CD4-positive, alpha-beta memory T cell (primary cell): ENCODE measurements at regions of chr20 and their contacts with region 1.

Region 1: DNA sequence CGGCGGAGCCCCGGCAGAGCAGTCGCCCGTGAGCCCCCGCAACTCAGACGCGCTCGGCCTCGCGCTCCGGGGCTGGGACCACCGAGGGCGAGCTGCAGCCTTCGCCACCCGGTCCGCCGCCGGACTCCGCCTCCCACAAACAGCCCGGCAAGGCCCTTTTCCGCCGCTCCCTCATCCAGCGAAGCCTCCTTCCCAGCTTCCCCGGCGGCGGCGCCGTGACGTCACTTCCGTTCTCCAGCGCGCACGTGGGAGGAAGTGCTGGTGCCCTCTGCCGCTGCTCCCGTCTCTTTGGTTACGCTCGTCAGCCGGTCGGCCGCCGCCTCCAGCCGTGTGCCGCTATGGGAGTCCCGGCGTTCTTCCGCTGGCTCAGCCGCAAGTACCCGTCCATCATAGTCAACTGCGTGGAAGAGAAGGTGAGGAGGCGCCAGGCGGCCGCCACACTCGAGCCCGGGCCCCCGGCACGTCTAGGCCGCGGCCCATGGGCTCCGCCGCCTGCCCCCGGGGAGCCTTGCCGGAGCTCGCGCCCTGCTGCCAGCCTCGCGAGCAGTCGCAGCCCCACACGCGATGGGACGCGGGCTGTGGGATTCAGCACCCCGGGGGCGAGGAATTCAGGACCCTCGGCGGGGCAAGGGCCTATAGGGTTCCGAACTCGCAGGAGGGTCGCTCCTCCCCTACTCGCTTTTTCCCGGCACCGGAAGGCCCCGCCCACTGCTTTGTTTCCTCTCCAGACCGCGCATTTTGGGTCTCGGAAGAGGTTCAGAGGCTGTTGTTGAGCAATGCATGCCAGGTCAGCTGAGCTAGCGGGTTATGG is at the start of gene XRN2:
- DNase-seq: peak; percentile 92 to 94 (median 92)
- H3K4me3 ChIP-seq: peak within 1 kb of the TSS; percentile 89 to 91
- H3K4me3 Mint-ChIP-seq: peak within 1 kb of the TSS; percentile 91 to 98 (median 97)
- H3K27ac ChIP-seq: peak within 1 kb of the TSS; percentile 91
- H3K27ac Mint-ChIP-seq: peak within 1 kb of the TSS; percentile 98 to 99 (median 99)
- H3K4me1 ChIP-seq: peaks cover 18% of the 10 kb centered on the region
- H3K4me1 Mint-ChIP-seq: peaks cover 23 to 41% (median 28%) of the 10 kb centered on the region in 4 donors
- H3K27me3 ChIP-seq: no peaks in the 10 kb centered on the region
- H3K27me3 Mint-ChIP-seq: peaks cover 0 to 3% of the 10 kb centered on the region in 2 donors
- total RNA-seq, gene XRN2: 52.8 to 56.3 TPM

Region 2: GRCh38 chr20:20712474-20713243 is 590.6 kb before region 1 on chr20 and contains the start of gene RALGAPA2:
- CTCF ChIA-PET with region 1: no interaction called
- POLR2A ChIA-PET with region 1: no interaction called
- intact Hi-C with region 1: loop called (anchors 1 kb)
- DNase-seq: peak; percentile 94 to 96 (median 94)
- H3K4me3 ChIP-seq: peak within 1 kb of the TSS; percentile 42 to 79
- H3K4me3 Mint-ChIP-seq: peak within 1 kb of the TSS; percentile 91 to 97 (median 96)
- H3K27ac ChIP-seq: peak within 1 kb of the TSS; percentile 79
- H3K27ac Mint-ChIP-seq: peak within 1 kb of the TSS; percentile 90 to 99 (median 96)
- H3K4me1 ChIP-seq: peaks cover 17% of the 10 kb centered on the region
- H3K4me1 Mint-ChIP-seq: peaks cover 25 to 39% (median 29%) of the 10 kb centered on the region in 4 donors
- H3K27me3 ChIP-seq: no peaks in the 10 kb centered on the region
- H3K27me3 Mint-ChIP-seq: peaks cover 0 to 3% of the 10 kb centered on the region in 2 donors
- total RNA-seq, gene RALGAPA2: 33.6 to 36.3 TPM

Region 3: DNA sequence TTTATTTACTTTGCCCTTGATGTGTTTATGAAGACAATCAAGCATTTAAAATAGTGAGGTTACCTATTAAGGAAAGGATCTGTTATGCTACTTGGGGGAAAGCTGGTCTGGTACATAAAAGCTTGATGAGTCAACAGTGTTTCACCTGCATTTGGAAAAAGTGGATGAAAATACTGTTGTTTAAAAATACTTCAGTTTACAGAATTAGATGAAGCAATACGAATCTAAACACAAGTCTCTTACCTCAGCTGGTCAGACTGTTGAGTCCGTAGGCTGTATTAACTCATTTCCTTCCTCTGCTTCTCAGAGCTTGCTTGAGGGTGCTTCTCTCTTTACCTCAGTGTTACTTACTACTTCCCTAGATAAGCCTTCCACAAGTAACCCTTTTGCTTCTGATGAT is 58.0 kb after region 1 on chr20:
- CTCF ChIA-PET with region 1: no interaction called
- POLR2A ChIA-PET with region 1: no interaction called
- intact Hi-C with region 1: loop called (anchors 10 kb)
- DNase-seq: no peak
- H3K4me3 ChIP-seq: no peak overlapping the region
- H3K4me3 Mint-ChIP-seq: no peak overlapping the region
- H3K27ac ChIP-seq: no peak overlapping the region
- H3K27ac Mint-ChIP-seq: peak overlapping the region in 1 of 7 donors; percentile 10
- H3K4me1 ChIP-seq: no peaks in the 10 kb centered on the region
- H3K4me1 Mint-ChIP-seq: peaks cover 2 to 7% (median 5%) of the 10 kb centered on the region in 4 donors
- H3K27me3 ChIP-seq: no peaks in the 10 kb centered on the region
- H3K27me3 Mint-ChIP-seq: no peaks in the 10 kb centered on the region

Region 4: GRCh38 chr20:21548390-21549035 is 245.2 kb after region 1 on chr20:
- CTCF ChIA-PET with region 1: no interaction called
- POLR2A ChIA-PET with region 1: interaction called, 10 read pairs
- intact Hi-C with region 1: no loop called
- DNase-seq: peak; percentile 74 to 86 (median 80)
- H3K4me3 ChIP-seq: peak overlapping the region; percentile 10 to 32
- H3K4me3 Mint-ChIP-seq: peak overlapping the region; percentile 74 to 88 (median 80)
- H3K27ac ChIP-seq: peak overlapping the region; percentile 43
- H3K27ac Mint-ChIP-seq: peak overlapping the region; percentile 84 to 97 (median 95)
- H3K4me1 ChIP-seq: peaks cover 44% of the 10 kb centered on the region
- H3K4me1 Mint-ChIP-seq: peaks cover 22 to 41% (median 32%) of the 10 kb centered on the region in 4 donors
- H3K27me3 ChIP-seq: no peaks in the 10 kb centered on the region
- H3K27me3 Mint-ChIP-seq: no peaks in the 10 kb centered on the region